Endothelial cell of umbilical vein (primary cell): ENCODE measurements at regions of chr1 and their contacts with region 1.

Region 1: DNA sequence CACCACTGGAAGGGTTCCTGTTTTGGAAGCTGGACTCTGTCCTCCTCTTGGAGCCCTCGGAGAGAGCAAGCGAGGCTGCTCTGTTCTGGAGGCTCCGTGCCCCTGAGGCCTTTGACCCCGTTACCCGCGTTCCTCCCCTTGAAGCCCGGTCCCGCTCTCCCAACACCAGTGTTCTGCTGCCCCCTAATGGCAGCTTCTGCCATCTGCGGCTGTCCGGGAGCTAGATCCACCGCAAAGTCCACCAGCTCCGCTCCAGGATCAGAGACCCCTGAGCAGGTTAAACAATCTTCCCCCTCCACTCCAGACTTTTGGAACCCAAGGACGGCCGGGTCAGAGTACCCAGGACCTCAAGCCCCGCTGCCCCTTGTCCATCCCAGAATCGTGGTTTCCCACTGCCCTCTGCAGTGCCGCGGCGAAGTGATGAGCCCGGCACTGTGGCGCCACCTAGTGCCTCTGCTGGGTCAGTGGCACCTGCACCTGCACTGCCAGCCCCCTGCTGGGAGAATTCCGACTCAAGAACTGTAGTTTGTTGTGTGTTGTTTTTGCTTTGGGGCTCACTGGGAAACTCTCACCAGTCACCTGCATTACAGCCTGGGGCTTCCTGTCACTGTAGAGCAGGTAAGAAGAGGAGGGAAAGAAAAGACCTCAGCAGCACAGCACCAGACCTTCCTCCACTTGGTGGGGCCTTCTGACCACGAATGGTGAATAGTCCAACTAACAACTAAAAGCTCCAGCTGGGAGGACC is 63.5 kb upstream of the NFASC start:
- DNase-seq: peak; percentile 81
- H3K4me3 ChIP-seq: peak overlapping the region in 2 of 3 experiments; percentile 33 to 40
- H3K27ac ChIP-seq: no peak overlapping the region
- H3K4me1 ChIP-seq: no peaks in the 10 kb centered on the region
- H3K27me3 ChIP-seq: peaks cover 2 to 3% of the 10 kb centered on the region in 2 experiments
- CTCF ChIP-seq: peak; percentile 91 to 100
- POLR2A ChIP-seq: no peak

Region 2: DNA sequence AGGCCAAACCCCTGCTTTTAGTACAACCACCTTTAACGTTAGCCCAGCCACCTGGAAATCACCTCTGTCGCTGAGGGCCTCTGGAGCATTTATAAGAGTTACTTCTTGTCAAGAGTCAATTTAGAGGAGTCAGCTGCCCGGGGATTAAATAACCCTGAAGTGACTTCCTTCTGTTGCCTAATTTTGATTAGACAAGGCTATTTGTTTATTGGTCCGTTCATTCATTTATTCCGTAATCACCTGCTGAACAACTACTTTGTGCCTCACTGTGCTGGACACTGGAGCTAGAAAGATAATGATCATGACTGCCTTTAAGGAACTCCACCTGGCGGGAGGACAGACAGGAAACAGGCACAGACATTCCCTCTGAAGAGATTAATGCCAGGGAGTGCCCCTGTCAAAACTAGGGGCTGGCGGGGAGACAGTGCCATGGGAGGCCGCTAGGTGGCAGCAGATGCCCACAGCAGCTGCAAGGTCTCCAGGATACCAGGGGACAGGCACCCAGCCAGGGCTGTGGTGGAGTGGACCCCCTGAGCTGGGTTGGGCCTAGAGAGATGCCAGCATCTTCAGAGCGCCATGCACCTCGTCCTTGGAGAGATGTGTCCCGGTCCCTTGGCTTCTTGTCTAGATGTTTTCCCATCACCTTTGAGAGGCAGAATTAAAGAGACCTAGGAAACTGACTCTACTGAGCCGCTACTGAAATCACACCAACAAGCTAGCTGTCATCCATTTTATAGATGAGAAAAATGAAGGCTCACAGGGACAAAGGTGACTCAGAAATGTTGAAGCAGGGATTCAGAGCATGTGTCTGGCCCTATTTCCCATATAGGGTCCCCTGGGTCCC is 644.7 kb before region 1 on chr1:
- CTCF ChIA-PET with region 1: interaction called, 11 read pairs
- POLR2A ChIA-PET with region 1: no interaction called
- dilution Hi-C with region 1: no loop called
- intact Hi-C with region 1: no loop called
- DNase-seq: peak; percentile 68
- H3K4me3 ChIP-seq: no peak overlapping the region
- H3K27ac ChIP-seq: no peak overlapping the region
- H3K4me1 ChIP-seq: peaks cover 3% of the 10 kb centered on the region
- H3K27me3 ChIP-seq: peaks cover 0 to 2% of the 10 kb centered on the region in 2 experiments
- CTCF ChIP-seq: peak; percentile 98
- POLR2A ChIP-seq: no peak

Region 3: DNA sequence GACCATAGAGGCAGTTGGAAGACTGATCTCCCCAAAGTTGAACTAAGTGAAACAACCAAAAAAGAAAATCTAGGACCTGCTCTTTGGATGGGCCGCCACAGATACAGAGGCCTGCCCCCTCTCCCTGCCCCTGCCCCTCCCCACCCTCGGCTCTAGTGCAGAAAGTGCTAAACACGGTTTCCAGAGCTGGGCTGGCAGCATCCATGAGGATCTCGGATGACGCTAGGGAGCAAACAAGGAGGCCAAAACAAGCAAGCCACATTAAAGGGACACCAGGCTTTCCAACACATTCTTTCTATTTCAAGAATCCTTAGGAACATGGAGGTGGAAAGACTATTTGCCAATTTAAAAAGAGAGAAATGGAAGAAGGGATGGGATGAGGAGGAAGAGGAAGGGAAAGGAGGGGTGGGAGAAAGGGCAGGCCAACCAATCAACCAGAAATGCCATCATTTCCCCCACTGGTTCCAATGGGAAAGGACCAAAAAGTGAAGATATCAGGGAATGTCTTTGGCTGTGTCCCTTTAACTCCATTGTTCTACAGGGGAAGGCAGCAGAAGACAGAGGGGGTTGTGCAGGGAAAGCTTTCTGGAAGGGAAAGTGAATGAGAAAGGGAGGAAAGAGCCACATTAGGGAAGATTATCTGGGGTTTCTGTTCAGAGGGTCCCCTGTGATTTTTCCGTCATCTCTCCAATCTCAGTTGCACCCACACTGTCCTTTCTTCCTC is 555.0 kb before region 1 on chr1:
- CTCF ChIA-PET with region 1: no interaction called
- POLR2A ChIA-PET with region 1: no interaction called
- dilution Hi-C with region 1: no loop called
- intact Hi-C with region 1: no loop called
- DNase-seq: no peak
- H3K4me3 ChIP-seq: no peak overlapping the region
- H3K27ac ChIP-seq: no peak overlapping the region
- H3K4me1 ChIP-seq: no peaks in the 10 kb centered on the region
- H3K27me3 ChIP-seq: no peaks in the 10 kb centered on the region
- CTCF ChIP-seq: no peak
- POLR2A ChIP-seq: no peak

Region 4: DNA sequence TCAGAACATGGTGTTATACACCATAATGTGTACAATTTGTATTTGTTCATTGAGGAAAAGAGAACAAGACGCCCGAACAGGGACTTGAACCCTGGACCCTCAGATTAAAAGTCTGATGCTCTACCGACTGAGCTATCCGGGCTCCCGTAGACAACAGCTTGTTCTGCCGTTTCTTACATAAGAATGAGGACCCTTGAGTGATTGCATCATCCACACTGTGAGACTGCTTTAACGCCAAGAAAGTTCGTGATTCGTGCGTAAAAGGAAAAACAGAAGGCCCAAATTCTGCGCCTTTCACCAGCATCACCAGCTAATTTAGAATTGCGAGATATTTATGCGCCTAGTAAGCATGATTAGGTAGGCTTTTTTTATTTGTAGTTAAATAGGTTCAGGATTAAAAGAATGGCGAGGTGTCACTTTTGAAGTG is 300.1 kb before region 1 on chr1:
- CTCF ChIA-PET with region 1: interaction called, 25 read pairs
- POLR2A ChIA-PET with region 1: no interaction called
- dilution Hi-C with region 1: no loop called
- intact Hi-C with region 1: loop called (anchors 1 kb)
- DNase-seq: peak; percentile 97
- H3K4me3 ChIP-seq: peak overlapping the region; percentile 32 to 94 (median 92)
- H3K27ac ChIP-seq: peak overlapping the region; percentile 76
- H3K4me1 ChIP-seq: peaks cover 34% of the 10 kb centered on the region
- H3K27me3 ChIP-seq: no peaks in the 10 kb centered on the region
- CTCF ChIP-seq: no peak
- POLR2A ChIP-seq: no peak

Region 5: DNA sequence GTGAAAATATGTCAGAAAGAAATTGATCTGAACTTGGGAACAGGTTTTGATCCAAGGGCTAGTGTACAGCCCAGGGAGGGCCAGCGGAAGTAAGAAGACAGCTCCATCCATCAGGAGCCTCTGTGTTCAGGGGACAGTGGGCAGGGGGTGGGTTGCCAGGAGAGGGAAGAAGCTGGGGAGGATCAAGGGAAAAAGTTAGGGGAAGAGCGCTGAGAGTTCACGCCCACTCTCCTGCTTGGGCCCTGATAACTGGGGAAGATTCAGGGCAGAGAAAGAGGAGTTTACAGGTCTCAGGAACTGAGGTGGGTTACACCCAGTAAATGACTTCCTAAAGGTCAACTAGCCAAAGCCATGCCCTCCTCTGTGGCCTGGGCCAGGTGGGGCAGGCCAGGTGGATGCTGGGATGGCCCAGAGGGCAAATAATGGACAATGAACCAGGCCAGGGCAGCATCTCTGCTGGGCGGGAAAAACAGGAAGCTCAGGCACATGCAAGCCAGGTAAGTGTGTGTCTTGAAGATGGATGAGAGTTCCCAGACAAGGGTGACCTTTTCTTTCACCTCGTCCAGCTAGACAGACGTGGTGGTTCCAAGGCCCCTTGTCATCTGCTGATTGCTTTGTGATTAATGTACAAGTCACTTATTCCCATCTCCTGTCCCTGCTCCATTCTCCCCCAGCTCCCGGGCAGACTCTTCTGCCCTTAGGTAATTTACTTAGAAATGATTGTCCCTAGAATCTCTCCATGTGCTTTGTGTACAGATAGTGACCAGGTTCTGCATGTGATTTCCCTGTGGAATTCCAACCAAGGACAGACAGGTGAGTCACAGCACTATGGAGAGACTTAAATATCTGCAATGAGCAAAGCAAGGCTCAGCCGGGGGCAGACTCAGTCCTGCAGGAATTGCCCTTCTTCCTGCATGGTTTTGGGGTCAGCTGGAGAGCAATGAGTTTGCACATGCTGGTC is 233.9 kb before region 1 on chr1:
- CTCF ChIA-PET with region 1: interaction called, 265 read pairs
- POLR2A ChIA-PET with region 1: no interaction called
- dilution Hi-C with region 1: no loop called
- intact Hi-C with region 1: no loop called
- DNase-seq: no peak
- H3K4me3 ChIP-seq: no peak overlapping the region
- H3K27ac ChIP-seq: no peak overlapping the region
- H3K4me1 ChIP-seq: peaks cover 4% of the 10 kb centered on the region
- H3K27me3 ChIP-seq: no peaks in the 10 kb centered on the region
- CTCF ChIP-seq: no peak
- POLR2A ChIP-seq: no peak

Region 6: GRCh38 chr1:204782118-204782700 is 24.9 kb before region 1 on chr1:
- CTCF ChIA-PET with region 1: interaction called, 130 read pairs
- POLR2A ChIA-PET with region 1: no interaction called
- dilution Hi-C with region 1: no loop called
- intact Hi-C with region 1: no loop called
- DNase-seq: no peak
- H3K4me3 ChIP-seq: no peak overlapping the region
- H3K27ac ChIP-seq: no peak overlapping the region
- H3K4me1 ChIP-seq: no peaks in the 10 kb centered on the region
- H3K27me3 ChIP-seq: peaks cover 0 to 5% of the 10 kb centered on the region in 2 experiments
- CTCF ChIP-seq: no peak
- POLR2A ChIP-seq: no peak

Region 7: DNA sequence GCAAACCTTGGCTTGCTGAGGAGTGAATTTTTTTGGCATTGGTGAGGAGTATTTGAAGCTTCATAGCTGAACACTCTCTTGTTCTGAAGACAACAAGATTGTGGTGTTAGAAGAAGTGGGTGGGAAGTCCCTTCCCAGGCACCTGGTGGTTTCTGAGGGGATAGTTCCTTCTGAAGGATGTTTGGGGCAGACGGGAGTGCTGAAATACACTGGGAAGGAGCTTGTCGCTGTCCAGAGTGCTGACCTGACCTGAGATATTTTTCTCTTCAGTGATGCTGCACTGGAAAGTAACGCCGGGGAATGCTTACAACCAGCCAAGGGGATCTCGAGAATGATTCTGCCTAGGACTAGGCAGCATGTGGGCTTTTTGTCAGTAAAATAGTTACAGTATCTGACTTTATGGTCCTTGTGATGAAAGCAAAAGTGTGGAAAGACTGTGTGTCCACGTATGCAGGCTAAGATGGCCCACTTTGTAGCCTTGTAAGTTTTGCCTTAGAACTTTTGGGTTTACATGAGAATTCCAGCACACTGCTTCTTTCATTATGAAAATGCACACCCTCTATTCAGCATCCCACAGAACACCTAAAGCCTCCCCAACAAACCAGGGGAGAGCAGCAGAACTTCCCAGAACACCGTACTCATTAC is 30.4 kb after region 1 on chr1:
- CTCF ChIA-PET with region 1: interaction called, 13 read pairs
- POLR2A ChIA-PET with region 1: no interaction called
- dilution Hi-C with region 1: no loop called
- intact Hi-C with region 1: no loop called
- DNase-seq: peak; percentile 37
- H3K4me3 ChIP-seq: no peak overlapping the region
- H3K27ac ChIP-seq: no peak overlapping the region
- H3K4me1 ChIP-seq: no peaks in the 10 kb centered on the region
- H3K27me3 ChIP-seq: peaks cover 0 to 3% of the 10 kb centered on the region in 2 experiments
- CTCF ChIP-seq: no peak
- POLR2A ChIP-seq: no peak

Region 8: GRCh38 chr1:204868340-204868700 is 61.2 kb after region 1 on chr1:
- CTCF ChIA-PET with region 1: no interaction called
- POLR2A ChIA-PET with region 1: no interaction called
- dilution Hi-C with region 1: no loop called
- intact Hi-C with region 1: no loop called
- DNase-seq: no peak
- H3K4me3 ChIP-seq: no peak overlapping the region
- H3K27ac ChIP-seq: no peak overlapping the region
- H3K4me1 ChIP-seq: no peaks in the 10 kb centered on the region
- H3K27me3 ChIP-seq: no peaks in the 10 kb centered on the region
- CTCF ChIP-seq: no peak
- POLR2A ChIP-seq: no peak